ENCODE measurements at regions of chr1 and their contacts with region 1.

Region 1: DNA sequence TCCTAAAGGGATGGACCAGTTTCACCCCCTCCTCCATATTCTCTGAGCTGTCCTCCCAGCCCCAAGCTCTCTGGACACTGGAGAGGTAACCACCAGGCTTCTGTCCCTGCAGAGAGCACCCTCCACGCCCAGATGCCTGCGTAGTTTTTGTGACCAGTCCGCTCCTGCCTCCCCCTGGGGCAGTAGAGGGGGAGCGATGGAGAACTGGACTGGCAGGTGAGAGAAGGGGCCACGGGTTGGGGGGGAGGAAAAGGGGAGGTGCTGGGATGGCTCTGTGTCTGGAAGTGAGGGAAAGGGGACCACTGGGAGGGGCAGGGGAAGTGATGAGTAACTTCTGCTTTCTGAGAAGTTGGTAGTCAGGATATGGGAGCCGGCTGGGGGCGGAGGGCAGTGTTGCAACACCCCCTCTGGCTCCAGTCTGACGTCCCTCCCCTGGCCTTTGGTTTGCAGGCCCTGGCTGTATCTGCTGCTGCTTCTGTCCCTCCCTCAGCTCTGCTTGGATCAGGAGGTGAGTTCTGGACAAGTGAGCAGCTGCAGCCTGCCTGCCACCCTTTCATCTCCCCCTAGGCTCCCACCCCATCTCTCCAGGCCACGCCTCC is 3.0 kb downstream of the ADAMTSL4 start:
- DNase-seq: peak; percentile 43 to 62
- H3K4me3 ChIP-seq: no peak overlapping the region
- H3K27ac ChIP-seq: peak overlapping the region in 2 of 3 donors; percentile 74 to 85
- H3K4me1 ChIP-seq: peaks cover 6 to 40% of the 10 kb centered on the region in 2 donors
- H3K27me3 ChIP-seq: no peaks in the 10 kb centered on the region
- CTCF ChIP-seq: no peak
- POLR2A ChIP-seq: peak in 1 of 2 donors; percentile 13

Region 2: DNA sequence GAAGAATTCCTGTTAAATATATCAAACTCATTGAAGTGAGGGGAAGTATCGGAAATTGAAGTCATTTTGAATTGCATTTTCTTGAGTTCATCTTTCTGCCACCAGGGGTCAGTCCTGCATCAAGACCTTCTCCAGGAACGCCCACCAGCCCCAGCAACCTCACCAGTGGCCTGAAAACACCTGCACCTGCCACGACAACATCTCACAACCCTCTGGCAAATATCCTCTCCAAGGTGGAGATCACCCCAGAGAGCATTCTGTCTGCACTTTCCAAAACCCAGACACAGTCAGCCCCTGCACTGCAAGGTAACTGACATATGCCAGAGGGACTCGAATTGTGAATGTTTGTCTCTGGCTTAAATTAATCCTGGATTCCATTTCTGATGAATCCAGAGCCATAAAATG is 87.8 kb before region 1 on chr1:
- intact Hi-C with region 1: no loop called
- DNase-seq: peak; percentile 63
- H3K4me3 ChIP-seq: no peak overlapping the region
- H3K27ac ChIP-seq: no peak overlapping the region
- H3K4me1 ChIP-seq: peaks cover 9 to 14% of the 10 kb centered on the region in 2 donors
- H3K27me3 ChIP-seq: no peaks in the 10 kb centered on the region
- CTCF ChIP-seq: peak; percentile 43 to 81 (median 65)
- POLR2A ChIP-seq: no peak

Region 3: GRCh38 chr1:150507905-150508854 is 44.0 kb before region 1 on chr1 and contains the start of gene ECM1:
- intact Hi-C with region 1: no loop called
- DNase-seq: no peak
- H3K4me3 ChIP-seq: no peak within 1 kb of the TSS
- H3K27ac ChIP-seq: peak within 1 kb of the TSS; percentile 39 to 61 (median 40)
- H3K4me1 ChIP-seq: no peaks in the 10 kb centered on the region
- H3K27me3 ChIP-seq: no peaks in the 10 kb centered on the region
- CTCF ChIP-seq: no peak
- POLR2A ChIP-seq: peak in 1 of 2 donors; percentile 14
- total RNA-seq, gene ECM1: 4.2 to 11.3 (median 7.0) TPM

Region 4: DNA sequence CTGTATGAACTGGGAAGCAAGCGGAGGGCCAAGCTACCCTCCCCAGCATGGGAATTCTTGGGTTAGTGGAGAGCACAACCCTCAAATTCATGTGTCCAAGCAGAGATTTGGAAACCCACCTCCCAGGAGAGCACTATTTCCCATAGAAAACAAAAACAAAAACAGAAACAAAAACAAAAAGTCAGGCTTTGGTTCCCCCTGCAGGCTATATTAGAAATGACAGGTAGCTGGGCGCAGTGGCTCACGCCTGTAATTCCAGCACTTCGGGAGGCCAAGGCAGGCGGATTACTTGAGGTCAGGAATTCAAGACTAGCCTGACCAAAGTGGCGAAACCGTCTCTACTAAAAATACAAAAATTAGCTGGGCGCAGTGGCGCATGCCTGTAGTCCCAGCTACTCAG is 443.7 kb after region 1 on chr1:
- intact Hi-C with region 1: loop called (anchors 10 kb)
- DNase-seq: peak; percentile 73 to 77
- H3K4me3 ChIP-seq: no peak overlapping the region
- H3K27ac ChIP-seq: peak overlapping the region in 1 of 3 donors; percentile 59
- H3K4me1 ChIP-seq: peaks cover 0 to 7% of the 10 kb centered on the region in 2 donors
- H3K27me3 ChIP-seq: no peaks in the 10 kb centered on the region
- CTCF ChIP-seq: peak; percentile 80 to 95 (median 83)
- POLR2A ChIP-seq: no peak

Measured in thyroid gland (tissue), 4 donors.